HepG2 (cell line): ENCODE measurements at regions of chr22 and their contacts with region 1.

Region 1: GRCh38 chr22:48734359-48734758 is 1093.3 kb downstream of the BRD1 start:
- DNase-seq: no peak
- ATAC-seq: no peak
- H3K4me3 ChIP-seq: no peak overlapping the region
- H3K27ac ChIP-seq: no peak overlapping the region
- H3K4me1 ChIP-seq: peaks cover 11% of the 10 kb centered on the region
- H3K27me3 ChIP-seq: no peaks in the 10 kb centered on the region
- CTCF ChIP-seq: no peak
- EP300 ChIP-seq: no peak
- POLR2A ChIP-seq: no peak
- RAD21 ChIP-seq: no peak

Region 2: GRCh38 chr22:48702573-48703264 is 31.6 kb before region 1 on chr22:
- CTCF ChIA-PET with region 1: no interaction called
- POLR2A ChIA-PET with region 1: no interaction called
- in situ Hi-C with region 1: no loop called
- intact Hi-C with region 1: loop called (anchors 2 kb)
- DNase-seq: peak; percentile 98
- ATAC-seq: peak; percentile 91
- H3K4me3 ChIP-seq: peak overlapping the region; percentile 8 to 66 (median 45); a peak in 4 of 6 replicates
- H3K27ac ChIP-seq: peak overlapping the region; percentile 94
- H3K4me1 ChIP-seq: peaks cover 92% of the 10 kb centered on the region
- H3K27me3 ChIP-seq: no peaks in the 10 kb centered on the region
- CTCF ChIP-seq: peak; percentile 51
- EP300 ChIP-seq: peak; percentile 92 to 97
- POLR2A ChIP-seq: peak; percentile 73 to 85
- RAD21 ChIP-seq: peak; percentile 53

Region 3: GRCh38 chr22:48866906-48867681 is 132.7 kb after region 1 on chr22:
- CTCF ChIA-PET with region 1: no interaction called
- POLR2A ChIA-PET with region 1: no interaction called
- in situ Hi-C with region 1: no loop called
- intact Hi-C with region 1: no loop called
- DNase-seq: no peak
- ATAC-seq: no peak
- H3K4me3 ChIP-seq: no peak overlapping the region
- H3K27ac ChIP-seq: no peak overlapping the region
- H3K4me1 ChIP-seq: peaks cover 8% of the 10 kb centered on the region; the same call in 1 of the 2 replicates
- H3K27me3 ChIP-seq: peaks cover 5 to 47% of the 10 kb centered on the region in 2 experiments; a peak in 3 of 5 replicates
- CTCF ChIP-seq: no peak
- EP300 ChIP-seq: no peak
- POLR2A ChIP-seq: no peak
- RAD21 ChIP-seq: no peak